ENCODE measurements at regions of chr1 and their contacts with region 1.

Region 1: DNA sequence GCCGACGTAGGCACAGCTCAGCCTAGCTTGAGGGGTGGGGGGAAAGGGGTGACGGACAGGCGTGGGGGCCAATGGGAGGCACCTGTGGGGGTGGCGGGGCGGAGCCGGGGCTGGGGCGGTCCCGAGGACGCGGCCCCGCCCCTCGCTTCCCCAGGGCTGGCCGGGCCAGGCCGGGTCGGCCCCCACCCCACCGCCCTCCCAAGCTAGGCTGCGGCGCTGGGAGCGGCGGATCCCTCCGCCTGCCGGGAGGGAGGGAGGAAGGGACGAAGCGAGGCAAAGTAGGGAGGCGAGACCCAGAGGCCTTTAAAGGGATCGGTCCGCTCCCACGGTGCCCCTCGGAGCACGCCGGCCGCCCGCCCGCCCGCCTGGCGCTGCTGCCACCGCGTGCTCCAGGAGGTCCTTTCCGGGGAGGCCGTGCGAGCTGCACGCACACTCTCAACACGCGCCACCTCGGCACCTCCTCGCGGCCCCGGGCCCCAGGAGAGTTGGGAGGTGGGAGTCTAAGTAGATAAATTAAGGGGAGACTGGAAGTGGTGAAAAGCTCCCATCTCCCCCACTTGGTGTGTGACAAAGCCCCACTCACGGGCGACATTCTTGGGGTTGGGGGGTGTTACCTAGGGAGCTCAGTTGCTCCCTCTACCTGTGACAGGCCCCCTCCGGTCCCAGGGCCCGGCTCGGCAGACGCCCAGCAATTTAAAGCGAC is 373 bp upstream of the MEF2D start:
- DNase-seq: peak; percentile 94 to 97 (median 97)
- H3K4me3 ChIP-seq: peak overlapping the region; percentile 77 to 97 (median 90)
- H3K27ac ChIP-seq: peak overlapping the region; percentile 95 to 97
- H3K4me1 ChIP-seq: peaks cover 28 to 82% (median 77%) of the 10 kb centered on the region in 4 experiments
- H3K27me3 ChIP-seq: no peaks in the 10 kb centered on the region

Region 2: DNA sequence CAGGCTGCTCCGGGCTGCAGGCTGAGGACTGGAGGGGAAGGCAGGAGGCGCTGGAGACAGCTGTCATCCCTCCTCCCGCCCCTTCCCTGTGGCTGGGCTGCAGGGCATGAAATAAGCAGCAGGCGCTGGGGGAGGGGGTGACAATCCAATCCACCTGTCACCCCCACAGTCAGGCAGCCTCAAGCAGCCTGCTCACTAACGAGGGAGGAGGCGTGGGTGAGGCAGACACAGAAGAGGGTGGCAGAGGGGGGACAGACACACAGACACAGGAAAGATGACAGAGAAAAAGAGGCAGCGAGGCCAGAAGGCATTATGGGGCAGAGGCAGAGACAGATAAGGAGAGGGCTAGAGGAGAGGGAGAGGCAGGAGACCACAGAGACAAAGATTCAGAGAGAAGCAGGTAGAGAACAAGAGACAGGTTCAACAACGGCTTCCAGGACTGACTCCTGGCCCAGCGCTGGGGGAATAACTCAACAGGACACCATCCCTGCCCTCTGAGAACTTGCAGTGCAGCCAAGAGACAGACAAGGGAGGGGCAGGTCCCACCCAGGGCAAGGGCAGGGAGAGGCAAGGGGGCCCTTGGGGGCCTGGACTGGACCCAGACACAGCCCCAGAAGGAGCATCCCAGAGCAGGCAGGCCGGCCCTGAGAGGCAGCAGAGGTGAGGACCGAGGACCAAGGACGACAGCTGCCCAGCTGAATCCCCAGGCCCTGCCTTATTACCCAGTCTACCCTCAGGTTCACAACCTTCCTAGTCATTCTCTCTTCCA is 11.6 kb before region 1 on chr1:
- CTCF ChIA-PET with region 1: interaction called, 114 read pairs
- POLR2A ChIA-PET with region 1: interaction called, 13 read pairs
- DNase-seq: peak in 2 of 3 donors; percentile 74 to 78
- H3K4me3 ChIP-seq: peak overlapping the region in 5 of 7 experiments; percentile 16 to 35 (median 21)
- H3K27ac ChIP-seq: peak overlapping the region in 1 of 2 experiments; percentile 69
- H3K4me1 ChIP-seq: peaks cover 18 to 74% (median 68%) of the 10 kb centered on the region in 4 experiments
- H3K27me3 ChIP-seq: no peaks in the 10 kb centered on the region

Region 3: DNA sequence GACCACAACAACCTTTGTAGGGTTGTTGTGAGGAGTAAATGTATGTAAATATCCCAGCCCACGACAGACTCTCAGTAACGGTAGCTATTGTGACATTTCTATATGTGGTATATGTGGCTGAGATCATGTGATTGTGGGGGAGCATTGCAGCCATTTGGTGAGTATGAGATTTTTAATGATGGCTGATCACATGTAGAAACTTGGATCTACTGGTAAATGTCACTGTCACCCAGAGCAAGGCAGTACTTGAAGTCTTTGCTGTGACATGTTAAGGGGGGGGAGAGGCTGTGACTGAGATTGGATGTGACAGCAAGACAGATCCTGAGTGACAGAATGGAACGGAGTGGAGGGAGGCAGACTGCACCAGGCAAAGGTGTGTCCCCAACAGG is 23.5 kb after region 1 on chr1:
- CTCF ChIA-PET with region 1: interaction called, 17 read pairs
- POLR2A ChIA-PET with region 1: interaction called, 26 read pairs
- DNase-seq: peak; percentile 50 to 83 (median 78)
- H3K4me3 ChIP-seq: peak overlapping the region in 3 of 7 experiments; percentile 47 to 62 (median 49)
- H3K27ac ChIP-seq: peak overlapping the region in 1 of 2 experiments; percentile 73
- H3K4me1 ChIP-seq: peaks cover 18 to 47% (median 27%) of the 10 kb centered on the region in 4 experiments
- H3K27me3 ChIP-seq: no peaks in the 10 kb centered on the region

Region 4: GRCh38 chr1:156540791-156541383 is 39.9 kb after region 1 on chr1:
- CTCF ChIA-PET with region 1: no interaction called
- POLR2A ChIA-PET with region 1: no interaction called
- DNase-seq: no peak
- H3K4me3 ChIP-seq: no peak overlapping the region
- H3K27ac ChIP-seq: no peak overlapping the region
- H3K4me1 ChIP-seq: peaks cover 0 to 33% (median 19%) of the 10 kb centered on the region in 4 experiments
- H3K27me3 ChIP-seq: no peaks in the 10 kb centered on the region

Measured in common myeloid progenitor, CD34-positive (primary cell).